Heart left ventricle (tissue), 16 donors: ENCODE measurements at regions of chr3 and their contacts with region 1.

Region 1: GRCh38 chr3:15815696-15816095 is 17.9 kb upstream of the ANKRD28 start:
- DNase-seq: no peak
- ATAC-seq: peak in 2 of 4 donors; percentile 57 to 59
- H3K4me3 ChIP-seq: no peak overlapping the region
- H3K27ac ChIP-seq: no peak overlapping the region
- H3K4me1 ChIP-seq: peaks cover 0 to 16% (median 4%) of the 10 kb centered on the region in 12 donors
- H3K27me3 ChIP-seq: no peaks in the 10 kb centered on the region
- CTCF ChIP-seq: peak; percentile 25 to 70 (median 52)
- POLR2A ChIP-seq: no peak

Region 2: GRCh38 chr3:15629860-15630597 is 185.7 kb before region 1 on chr3:
- intact Hi-C with region 1: loop called in 8 of 10 experiments (anchors 1 to 5 kb)
- DNase-seq: peak in 4 of 5 donors; percentile 40 to 61 (median 52)
- ATAC-seq: peak; percentile 73 to 95 (median 92)
- H3K4me3 ChIP-seq: peak overlapping the region in 9 of 12 donors; percentile 10 to 46 (median 30)
- H3K27ac ChIP-seq: peak overlapping the region in 7 of 12 donors; percentile 35 to 65 (median 48)
- H3K4me1 ChIP-seq: peaks cover 0 to 31% (median 20%) of the 10 kb centered on the region in 12 donors
- H3K27me3 ChIP-seq: no peaks in the 10 kb centered on the region
- CTCF ChIP-seq: peak; percentile 54 to 87 (median 79)
- POLR2A ChIP-seq: no peak

Region 3: DNA sequence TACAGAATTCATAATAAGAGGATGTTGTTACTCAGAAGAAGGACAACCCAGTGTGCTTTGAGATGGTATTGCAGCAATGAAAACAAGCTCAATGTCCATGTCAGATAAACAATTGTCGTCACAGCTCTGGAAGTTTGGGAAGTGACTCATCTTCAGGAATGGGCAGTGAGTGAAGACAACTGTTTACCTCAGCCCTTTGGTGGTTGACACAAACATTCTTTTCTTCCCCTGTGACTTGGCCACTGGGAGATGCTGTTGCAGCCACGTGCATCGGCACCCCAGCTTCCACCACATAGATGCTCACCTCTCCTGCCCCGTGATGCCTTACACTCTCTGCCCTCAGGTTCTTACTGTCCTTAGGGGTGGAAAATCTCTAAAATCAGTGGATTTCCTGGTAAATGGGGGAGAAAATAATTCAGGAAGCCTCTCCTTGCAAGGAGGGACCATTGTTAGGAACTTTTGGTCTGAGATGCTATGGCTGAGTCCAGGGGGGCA is 244.7 kb after region 1 on chr3:
- intact Hi-C with region 1: loop called in 1 of 10 experiments (anchors 10 kb)
- DNase-seq: peak in 1 of 5 donors; percentile 57
- ATAC-seq: peak; percentile 53 to 92 (median 86)
- H3K4me3 ChIP-seq: no peak overlapping the region
- H3K27ac ChIP-seq: peak overlapping the region in 10 of 12 donors; percentile 6 to 86 (median 74)
- H3K4me1 ChIP-seq: peaks cover 0 to 42% (median 28%) of the 10 kb centered on the region in 12 donors
- H3K27me3 ChIP-seq: no peaks in the 10 kb centered on the region
- CTCF ChIP-seq: peak in 2 of 12 donors; percentile 6 to 11
- POLR2A ChIP-seq: no peak

Region 4: GRCh38 chr3:16247276-16248061 is 431.8 kb after region 1 on chr3:
- intact Hi-C with region 1: loop called (anchors 1 to 5 kb)
- DNase-seq: peak; percentile 75 to 86 (median 79)
- ATAC-seq: peak; percentile 40 to 68 (median 65)
- H3K4me3 ChIP-seq: no peak overlapping the region
- H3K27ac ChIP-seq: no peak overlapping the region
- H3K4me1 ChIP-seq: peaks cover 0 to 28% (median 13%) of the 10 kb centered on the region in 12 donors
- H3K27me3 ChIP-seq: no peaks in the 10 kb centered on the region
- CTCF ChIP-seq: peak; percentile 85 to 98 (median 94)
- POLR2A ChIP-seq: no peak